Gastrocnemius medialis (tissue), 4 donors: ENCODE measurements at regions of chr16 and their contacts with region 1.

Region 1: DNA sequence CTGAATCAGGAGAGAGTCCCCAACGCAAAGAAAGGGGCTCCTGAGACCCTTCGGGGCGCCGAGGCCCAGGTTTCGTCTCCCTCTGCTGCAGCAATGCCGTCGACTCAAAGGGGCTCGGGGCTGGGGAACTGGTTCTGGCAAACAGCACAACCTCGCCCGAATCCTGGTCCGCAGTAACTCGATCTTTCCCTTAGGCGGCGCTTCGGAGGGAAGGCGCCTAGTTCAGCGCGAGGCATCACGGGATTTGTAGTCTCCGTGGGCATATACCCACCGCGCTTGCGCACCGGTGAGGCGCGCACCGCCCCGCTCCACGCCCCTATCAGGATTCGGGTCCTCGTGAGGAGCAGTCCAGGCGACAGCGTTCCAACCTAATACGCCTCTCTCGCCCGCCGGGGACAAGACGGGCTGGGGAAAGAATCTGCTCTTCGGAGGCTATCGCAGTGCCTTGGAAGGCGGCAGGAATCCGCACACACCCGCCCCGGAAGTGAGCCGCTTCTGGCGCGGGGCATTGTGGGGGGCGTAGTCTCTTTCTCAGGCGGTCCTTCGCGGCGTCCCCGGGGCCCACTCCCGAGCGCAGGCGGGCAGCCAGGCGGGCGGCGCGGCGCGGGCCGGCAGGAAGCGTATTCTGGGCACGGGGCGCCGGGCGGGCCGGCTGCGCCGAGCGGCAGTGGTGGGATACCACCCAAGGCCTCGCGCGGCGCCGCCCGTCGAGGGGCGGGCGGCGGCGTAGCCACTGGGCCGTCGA is at the start of gene THAP11:
- DNase-seq: peak; percentile 91 to 92
- ATAC-seq: peak; percentile 77 to 82
- H3K4me3 ChIP-seq: peak within 1 kb of the TSS; percentile 76 to 95 (median 78)
- H3K27ac ChIP-seq: peak within 1 kb of the TSS; percentile 98 to 100 (median 99)
- H3K4me1 ChIP-seq: peaks cover 39 to 43% of the 10 kb centered on the region in 2 donors
- H3K27me3 ChIP-seq: no peaks in the 10 kb centered on the region
- CTCF ChIP-seq: peak; percentile 76 to 91 (median 89)
- POLR2A ChIP-seq: peak; percentile 86 to 87
- total RNA-seq, gene THAP11: 61.9 to 120 (median 102) TPM

Region 2: GRCh38 chr16:67595033-67595355 is 246.9 kb before region 1 on chr16:
- in situ Hi-C with region 1: no loop called
- intact Hi-C with region 1: no loop called
- DNase-seq: peak; percentile 29 to 35
- ATAC-seq: peak; percentile 60 to 69
- H3K4me3 ChIP-seq: no peak overlapping the region
- H3K27ac ChIP-seq: peak overlapping the region in 2 of 4 donors; percentile 8 to 33
- H3K4me1 ChIP-seq: peaks cover 14% of the 10 kb centered on the region in 2 donors
- H3K27me3 ChIP-seq: no peaks in the 10 kb centered on the region
- CTCF ChIP-seq: no peak
- POLR2A ChIP-seq: no peak

Region 3: GRCh38 chr16:67828651-67829050 is 13.3 kb before region 1 on chr16:
- in situ Hi-C with region 1: no loop called
- intact Hi-C with region 1: no loop called
- DNase-seq: no peak
- ATAC-seq: no peak
- H3K4me3 ChIP-seq: no peak overlapping the region
- H3K27ac ChIP-seq: no peak overlapping the region
- H3K4me1 ChIP-seq: peaks cover 5 to 8% of the 10 kb centered on the region in 2 donors
- H3K27me3 ChIP-seq: no peaks in the 10 kb centered on the region
- CTCF ChIP-seq: no peak
- POLR2A ChIP-seq: no peak

Region 4: DNA sequence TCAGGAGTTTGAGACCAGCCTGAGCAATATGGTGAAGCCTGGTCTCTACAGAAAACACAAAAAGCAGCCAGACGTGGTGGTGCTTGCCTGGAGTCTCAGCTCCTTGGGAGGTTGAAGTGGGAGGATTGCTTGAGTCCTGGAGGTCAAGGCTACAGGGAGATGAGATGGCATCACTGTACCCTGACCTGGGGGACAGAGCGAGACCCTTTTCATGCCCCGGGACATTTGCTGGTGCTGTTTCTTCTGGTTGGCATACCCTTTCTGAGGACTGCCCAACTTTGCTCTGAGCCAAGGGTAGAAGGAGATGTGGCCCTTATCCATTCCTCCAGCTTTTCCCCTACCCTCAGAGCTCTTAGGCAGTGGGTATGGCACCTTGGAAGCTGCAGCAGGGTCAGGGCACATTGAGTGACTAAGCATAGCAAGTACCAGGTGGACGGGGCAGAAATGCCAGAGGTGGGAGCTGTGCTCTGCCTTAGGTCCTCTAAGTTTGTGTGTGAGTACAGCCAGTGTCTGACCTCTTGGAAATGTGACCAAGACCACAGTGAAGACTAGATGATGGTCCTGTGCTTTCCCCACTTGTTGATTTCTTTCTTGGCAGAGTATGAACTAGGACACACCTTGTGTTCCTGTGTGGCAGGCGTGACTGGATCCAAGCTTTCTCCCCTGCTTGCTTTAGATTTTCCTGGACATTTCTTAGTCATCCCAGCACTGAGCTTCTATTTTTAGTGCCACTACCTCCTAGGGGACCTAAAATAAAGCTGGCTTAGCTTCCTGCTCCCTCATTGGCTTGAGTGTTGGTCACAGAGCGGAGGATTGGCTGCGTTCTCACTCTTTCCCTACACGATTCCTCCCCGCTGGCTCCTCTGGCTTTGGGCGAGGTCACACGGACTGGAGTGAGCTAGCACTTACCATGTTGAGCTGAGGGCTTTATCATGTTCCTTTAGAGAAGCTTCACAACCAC is 21.0 kb after region 1 on chr16:
- in situ Hi-C with region 1: no loop called
- intact Hi-C with region 1: loop called (anchors 1 kb)
- DNase-seq: peak; percentile 91 to 95
- ATAC-seq: peak; percentile 90 to 91
- H3K4me3 ChIP-seq: peak overlapping the region in 1 of 4 donors; percentile 39
- H3K27ac ChIP-seq: peak overlapping the region; percentile 93 to 99 (median 97)
- H3K4me1 ChIP-seq: peaks cover 62 to 67% of the 10 kb centered on the region in 2 donors
- H3K27me3 ChIP-seq: no peaks in the 10 kb centered on the region
- CTCF ChIP-seq: no peak
- POLR2A ChIP-seq: peak; percentile 79 to 82

Region 5: DNA sequence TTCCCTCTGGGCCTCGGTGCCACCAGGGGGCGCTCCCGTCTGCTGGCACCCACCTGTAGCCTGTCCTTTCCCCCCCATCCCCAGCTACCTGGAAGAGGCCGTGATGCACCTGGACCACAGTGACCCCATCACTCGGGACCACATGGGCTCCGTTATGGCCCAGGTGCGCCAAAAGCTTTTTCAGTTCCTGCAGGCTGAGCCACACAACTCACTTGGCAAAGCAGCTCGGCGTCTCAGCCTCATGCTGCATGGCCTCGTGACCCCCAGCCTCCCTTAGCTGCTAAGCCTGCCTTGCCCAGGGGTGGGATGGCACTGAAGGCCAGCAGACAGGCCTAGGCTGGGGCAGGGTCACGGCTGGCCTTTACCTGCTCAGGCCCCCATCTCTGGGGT is 41.9 kb after region 1 on chr16:
- in situ Hi-C with region 1: no loop called
- intact Hi-C with region 1: no loop called
- DNase-seq: peak in 1 of 2 donors; percentile 64
- ATAC-seq: peak in 1 of 2 donors; percentile 22
- H3K4me3 ChIP-seq: no peak overlapping the region
- H3K27ac ChIP-seq: peak overlapping the region; percentile 87 to 95 (median 90)
- H3K4me1 ChIP-seq: peaks cover 51 to 52% of the 10 kb centered on the region in 2 donors
- H3K27me3 ChIP-seq: no peaks in the 10 kb centered on the region
- CTCF ChIP-seq: peak; percentile 76 to 91 (median 91)
- POLR2A ChIP-seq: no peak